Transverse colon (tissue), 4 donors: ENCODE measurements at regions of chr2 and their contacts with region 1.

Region 1: DNA sequence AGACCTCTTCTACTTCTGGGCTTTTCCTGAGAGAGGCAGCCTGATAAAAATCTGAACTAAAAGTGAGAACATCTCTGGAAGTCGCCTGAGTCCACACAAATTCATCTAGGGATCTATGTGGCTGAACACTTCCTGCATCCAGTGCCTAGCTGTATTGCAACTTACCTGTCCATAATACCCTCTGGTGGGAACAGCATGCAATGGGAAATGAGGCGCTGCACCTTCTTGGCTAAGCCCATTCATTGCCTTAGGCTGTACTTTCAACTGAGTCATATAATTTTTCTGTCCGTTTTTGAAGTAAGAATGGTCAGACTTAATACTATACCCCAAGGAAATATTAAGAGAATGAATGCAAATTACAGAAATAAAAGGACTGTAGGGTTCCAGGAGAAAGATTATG is 22.2 kb downstream of the SIX2 start:
- DNase-seq: no peak
- H3K4me3 ChIP-seq: no peak overlapping the region
- H3K27ac ChIP-seq: no peak overlapping the region
- H3K4me1 ChIP-seq: no peaks in the 10 kb centered on the region
- H3K27me3 ChIP-seq: peaks cover 46% of the 10 kb centered on the region
- CTCF ChIP-seq: no peak
- EP300 ChIP-seq: no peak
- POLR2A ChIP-seq: no peak

Region 2: GRCh38 chr2:44061876-44062275 is 925.2 kb before region 1 on chr2:
- in situ Hi-C with region 1: no loop called
- intact Hi-C with region 1: no loop called
- DNase-seq: no peak
- H3K4me3 ChIP-seq: no peak overlapping the region
- H3K27ac ChIP-seq: no peak overlapping the region
- H3K4me1 ChIP-seq: peaks cover 0 to 7% (median 0%) of the 10 kb centered on the region in 4 donors
- H3K27me3 ChIP-seq: no peaks in the 10 kb centered on the region
- CTCF ChIP-seq: no peak
- EP300 ChIP-seq: no peak
- POLR2A ChIP-seq: no peak

Region 3: GRCh38 chr2:44802777-44803424 is 184.1 kb before region 1 on chr2:
- in situ Hi-C with region 1: no loop called
- intact Hi-C with region 1: no loop called
- DNase-seq: no peak
- H3K4me3 ChIP-seq: peak overlapping the region in 2 of 4 donors; percentile 10 to 35
- H3K27ac ChIP-seq: no peak overlapping the region
- H3K4me1 ChIP-seq: peaks cover 0 to 14% (median 11%) of the 10 kb centered on the region in 4 donors
- H3K27me3 ChIP-seq: peaks cover 100% of the 10 kb centered on the region
- CTCF ChIP-seq: no peak
- EP300 ChIP-seq: no peak
- POLR2A ChIP-seq: no peak

Region 4: GRCh38 chr2:45494269-45494977 is 507.4 kb after region 1 on chr2:
- in situ Hi-C with region 1: loop called (anchors 5 to 10 kb)
- intact Hi-C with region 1: no loop called
- DNase-seq: no peak
- H3K4me3 ChIP-seq: no peak overlapping the region
- H3K27ac ChIP-seq: no peak overlapping the region
- H3K4me1 ChIP-seq: no peaks in the 10 kb centered on the region
- H3K27me3 ChIP-seq: no peaks in the 10 kb centered on the region
- CTCF ChIP-seq: peak; percentile 57 to 74 (median 70)
- EP300 ChIP-seq: no peak
- POLR2A ChIP-seq: no peak